Aorta (tissue), 5 donors: ENCODE measurements at regions of chr2 and their contacts with region 1.

Region 1: GRCh38 chr2:8681786-8682692 is at the start of gene ID2:
- DNase-seq: peak; percentile 100
- ATAC-seq: peak; percentile 87
- H3K4me3 ChIP-seq: peak within 1 kb of the TSS; percentile 93 to 97
- H3K27ac ChIP-seq: peak within 1 kb of the TSS; percentile 83 to 97
- H3K4me1 ChIP-seq: no peaks in the 10 kb centered on the region
- H3K27me3 ChIP-seq: peaks cover 0 to 2% of the 10 kb centered on the region in 2 donors
- total RNA-seq, gene ID2: 212 to 322 TPM

Region 2: DNA sequence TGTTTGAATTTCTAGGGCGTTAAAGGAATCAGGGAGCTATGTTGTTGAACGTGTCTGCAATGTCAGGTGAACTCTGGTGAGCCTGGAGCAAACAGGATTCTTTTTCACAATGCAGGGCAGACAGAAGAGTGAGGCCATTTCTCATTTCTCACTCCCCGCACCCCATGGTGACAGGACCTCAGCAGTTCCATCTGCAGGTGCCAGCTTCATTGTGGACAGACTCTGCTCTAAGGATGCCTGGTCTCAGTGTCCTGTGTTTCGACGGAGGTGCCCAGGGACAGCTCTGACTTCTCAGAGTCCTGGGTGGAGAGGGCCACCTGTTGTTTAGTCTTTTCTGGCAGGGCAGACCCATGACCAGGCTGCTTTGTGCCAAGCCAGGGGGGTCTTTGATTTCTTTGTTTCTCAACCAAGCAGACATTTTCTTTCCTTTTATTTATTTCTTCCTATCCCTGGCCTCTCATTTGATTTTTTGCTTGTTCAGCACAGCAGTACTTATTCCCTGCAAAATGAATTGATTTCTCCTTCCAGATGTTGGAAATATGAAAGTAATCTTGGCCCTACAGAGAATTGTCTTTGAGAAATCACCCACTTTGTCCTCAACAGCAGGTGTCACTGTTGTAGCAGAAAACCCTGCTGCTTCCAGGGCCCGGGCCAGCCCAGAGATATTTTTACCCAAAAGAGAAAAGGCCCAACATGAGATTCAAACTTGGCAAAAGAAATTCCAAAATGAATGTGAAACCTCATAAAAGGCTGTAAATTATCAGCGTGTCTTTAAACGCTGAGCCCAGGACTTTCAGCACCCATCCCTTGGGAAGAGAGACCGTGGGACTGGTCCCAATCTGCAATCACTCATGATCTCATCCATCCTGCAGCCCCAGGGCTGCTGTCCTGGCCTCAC is 1563.2 kb before region 1 on chr2:
- intact Hi-C with region 1: loop called in 1 of 2 experiments (anchors 5 kb)
- DNase-seq: peak in 1 of 2 donors; percentile 55
- ATAC-seq: peak; percentile 79
- H3K4me3 ChIP-seq: no peak overlapping the region
- H3K27ac ChIP-seq: no peak overlapping the region
- H3K4me1 ChIP-seq: no peaks in the 10 kb centered on the region
- H3K27me3 ChIP-seq: no peaks in the 10 kb centered on the region

Region 3: GRCh38 chr2:7427293-7428060 is 1254.6 kb before region 1 on chr2:
- intact Hi-C with region 1: loop called (anchors 2 to 5 kb)
- DNase-seq: no peak
- ATAC-seq: peak; percentile 66
- H3K4me3 ChIP-seq: no peak overlapping the region
- H3K27ac ChIP-seq: no peak overlapping the region
- H3K4me1 ChIP-seq: no peaks in the 10 kb centered on the region
- H3K27me3 ChIP-seq: no peaks in the 10 kb centered on the region

Region 4: DNA sequence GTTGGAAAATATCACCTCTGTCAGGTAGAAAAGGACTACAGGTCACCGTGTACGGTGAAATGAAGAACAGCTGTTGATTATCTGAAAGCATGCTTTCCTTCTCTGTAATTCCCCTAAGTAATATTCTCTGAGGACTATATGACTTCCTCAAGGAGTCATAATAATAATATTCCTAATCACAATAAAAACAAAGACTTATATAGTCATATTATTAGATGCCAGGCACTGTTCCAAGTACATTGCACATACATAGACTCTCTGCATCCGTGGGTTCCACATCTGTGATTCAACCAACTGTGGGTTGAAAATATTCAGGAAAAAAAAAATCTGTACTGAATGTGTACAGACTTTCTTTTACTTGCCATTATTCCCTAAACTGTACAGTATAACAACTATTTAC is 512.6 kb before region 1 on chr2:
- intact Hi-C with region 1: loop called (anchors 5 kb)
- DNase-seq: no peak
- ATAC-seq: peak; percentile 26
- H3K4me3 ChIP-seq: no peak overlapping the region
- H3K27ac ChIP-seq: peak overlapping the region; percentile 46 to 83
- H3K4me1 ChIP-seq: no peaks in the 10 kb centered on the region
- H3K27me3 ChIP-seq: no peaks in the 10 kb centered on the region

Region 5: DNA sequence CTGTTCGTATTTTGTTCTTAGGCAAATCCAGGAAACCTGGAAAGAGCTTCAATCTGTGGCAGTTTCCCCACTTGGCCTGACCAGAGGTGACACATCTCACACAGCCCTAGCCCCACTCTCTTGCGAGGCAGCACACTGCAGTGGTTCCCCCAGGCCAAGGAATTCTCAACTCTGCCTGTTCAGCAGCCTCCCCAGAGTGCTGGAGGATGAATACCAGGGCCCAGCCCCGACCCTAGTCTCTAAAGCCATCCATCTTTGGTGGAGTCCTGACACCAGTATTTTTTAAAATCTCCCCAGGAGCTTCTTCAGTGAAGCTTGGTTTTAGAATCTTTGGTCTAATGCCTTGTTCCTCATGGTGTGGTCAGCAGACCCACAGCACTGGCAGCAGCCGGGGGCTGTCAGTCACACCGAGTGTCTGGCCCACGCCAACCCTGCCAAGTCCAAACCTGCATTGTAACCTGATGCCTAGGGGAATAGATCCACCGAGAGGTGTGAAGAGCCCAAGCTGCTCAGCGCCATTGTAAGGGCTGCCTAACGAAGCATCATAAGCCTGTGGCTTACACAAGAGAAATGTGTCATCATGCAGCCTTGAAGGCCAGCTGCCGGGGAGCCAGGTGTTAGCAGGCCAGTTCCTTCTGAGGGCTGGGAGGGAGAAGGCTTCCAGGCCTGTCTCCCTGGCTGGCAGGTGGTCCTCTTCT is 428.9 kb before region 1 on chr2:
- intact Hi-C with region 1: loop called (anchors 1 to 10 kb)
- DNase-seq: no peak
- ATAC-seq: no peak
- H3K4me3 ChIP-seq: no peak overlapping the region
- H3K27ac ChIP-seq: no peak overlapping the region
- H3K4me1 ChIP-seq: no peaks in the 10 kb centered on the region
- H3K27me3 ChIP-seq: no peaks in the 10 kb centered on the region

Region 6: DNA sequence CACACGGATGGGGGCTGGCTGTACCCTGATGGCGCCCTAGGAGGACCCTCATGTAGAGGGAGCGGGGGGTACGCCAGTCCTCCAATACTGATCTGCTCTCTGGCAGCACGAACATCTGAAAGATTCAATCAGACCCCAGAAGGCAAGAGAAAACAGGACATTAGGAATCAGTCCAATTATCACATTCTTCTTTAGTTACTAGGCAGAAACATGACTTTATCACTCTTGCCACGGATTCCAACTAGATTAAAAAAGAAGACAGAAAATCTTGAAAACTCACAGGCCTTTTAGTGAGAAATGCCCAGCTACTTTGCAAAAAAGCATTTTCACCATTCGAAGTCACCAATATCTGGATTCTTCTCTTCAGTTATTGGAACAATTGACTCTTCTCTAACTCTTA is 68.2 kb after region 1 on chr2:
- intact Hi-C with region 1: no loop called
- DNase-seq: no peak
- ATAC-seq: no peak
- H3K4me3 ChIP-seq: no peak overlapping the region
- H3K27ac ChIP-seq: no peak overlapping the region
- H3K4me1 ChIP-seq: no peaks in the 10 kb centered on the region
- H3K27me3 ChIP-seq: no peaks in the 10 kb centered on the region

Region 7: DNA sequence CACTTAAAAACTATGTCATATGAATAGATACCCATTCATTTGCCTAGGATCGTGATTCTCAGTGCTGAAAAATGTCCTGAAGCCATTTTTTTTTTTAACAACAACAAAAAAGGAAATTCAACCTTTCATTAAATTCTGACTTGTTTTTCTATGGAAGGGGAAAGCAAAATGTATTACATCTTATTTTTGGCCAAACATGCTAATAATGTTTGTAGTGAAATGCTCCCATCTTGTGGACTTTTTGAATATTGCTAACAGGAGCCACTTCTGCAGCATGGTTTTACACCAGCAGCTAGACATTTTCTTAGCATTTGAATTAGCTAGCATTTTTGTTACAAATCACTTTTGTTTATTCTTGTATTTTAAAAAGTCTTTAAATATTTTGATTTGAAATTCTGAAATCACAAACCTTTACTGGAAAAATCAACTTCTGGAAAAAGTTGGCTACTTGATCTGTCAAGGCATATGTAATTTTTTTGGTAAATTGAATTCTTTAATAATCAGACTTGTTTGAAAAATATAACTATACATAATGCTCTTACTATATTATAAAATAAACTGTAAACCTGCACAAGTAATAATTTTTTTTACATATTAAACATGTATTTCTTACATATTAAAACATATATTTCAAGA is 79.6 kb after region 1 on chr2:
- intact Hi-C with region 1: loop called in 1 of 2 experiments (anchors 5 kb)
- DNase-seq: no peak
- ATAC-seq: no peak
- H3K4me3 ChIP-seq: no peak overlapping the region
- H3K27ac ChIP-seq: no peak overlapping the region
- H3K4me1 ChIP-seq: peaks cover 0 to 1% of the 10 kb centered on the region in 2 donors
- H3K27me3 ChIP-seq: no peaks in the 10 kb centered on the region